ENCODE measurements at regions of chr13 and their contacts with region 1.

Region 1: GRCh38 chr13:31044377-31045285 is 112.2 kb downstream of the TEX26 start:
- DNase-seq: peak; percentile 66 to 88 (median 75)
- ATAC-seq: peak; percentile 81 to 92 (median 84)
- H3K4me3 ChIP-seq: no peak overlapping the region
- H3K27ac ChIP-seq: peak overlapping the region in 2 of 12 donors; percentile 59 to 82
- H3K4me1 ChIP-seq: peaks cover 0 to 32% (median 10%) of the 10 kb centered on the region in 12 donors
- H3K27me3 ChIP-seq: peaks cover 0 to 18% (median 0%) of the 10 kb centered on the region in 9 donors
- CTCF ChIP-seq: peak; percentile 91 to 98 (median 95)
- POLR2A ChIP-seq: no peak

Region 2: GRCh38 chr13:30593001-30593400 is 451.6 kb before region 1 on chr13:
- intact Hi-C with region 1: no loop called
- DNase-seq: no peak
- ATAC-seq: no peak
- H3K4me3 ChIP-seq: no peak overlapping the region
- H3K27ac ChIP-seq: no peak overlapping the region
- H3K4me1 ChIP-seq: no peaks in the 10 kb centered on the region
- H3K27me3 ChIP-seq: no peaks in the 10 kb centered on the region
- CTCF ChIP-seq: no peak
- POLR2A ChIP-seq: no peak

Region 3: DNA sequence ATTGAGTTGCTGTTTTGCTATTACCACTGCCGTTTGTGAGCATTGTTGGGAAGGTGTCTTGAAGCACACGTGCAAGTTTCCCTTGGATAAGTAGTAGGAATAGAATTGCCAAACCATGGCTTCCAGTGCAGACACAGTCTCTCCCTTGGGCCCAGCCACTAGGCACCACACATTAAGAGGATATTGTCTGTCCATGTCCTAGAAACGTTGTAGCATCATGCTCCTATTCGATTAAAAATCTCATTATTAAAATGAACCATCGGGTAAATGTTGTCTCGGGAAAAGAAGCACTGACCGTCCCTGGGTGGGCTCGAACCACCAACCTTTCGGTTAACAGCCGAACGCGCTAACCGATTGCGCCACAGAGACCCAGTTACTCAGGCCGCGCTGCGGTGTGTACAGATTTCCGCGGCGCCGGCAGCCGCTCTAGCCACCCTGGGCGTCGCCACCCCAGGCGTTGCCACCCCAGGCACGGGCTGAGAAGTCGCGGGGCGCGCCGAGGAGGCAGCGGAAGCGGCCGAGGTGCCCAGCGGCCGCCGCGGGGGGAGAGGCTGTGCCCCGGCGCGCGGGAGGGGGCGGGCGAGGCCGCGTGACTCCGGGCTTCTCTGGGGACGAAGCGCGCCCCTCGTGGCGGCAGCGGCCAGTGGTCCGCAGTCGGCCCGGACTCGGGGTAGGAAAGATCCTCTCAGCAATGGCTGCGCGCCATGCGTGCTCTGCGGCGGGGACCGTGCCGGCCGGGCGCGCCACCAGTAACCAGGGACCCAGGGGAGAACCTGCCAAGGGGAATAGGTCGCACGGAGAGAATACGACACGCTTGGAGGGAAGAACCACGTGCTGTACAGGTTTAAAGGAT is 370.7 kb before region 1 on chr13:
- intact Hi-C with region 1: loop called in 3 of 10 experiments (anchors 5 to 10 kb)
- DNase-seq: peak; percentile 88 to 95 (median 91)
- ATAC-seq: peak; percentile 91 to 97 (median 95)
- H3K4me3 ChIP-seq: peak overlapping the region; percentile 30 to 80 (median 62)
- H3K27ac ChIP-seq: peak overlapping the region in 11 of 12 donors; percentile 64 to 86 (median 79)
- H3K4me1 ChIP-seq: peaks cover 0 to 12% (median 2%) of the 10 kb centered on the region in 12 donors
- H3K27me3 ChIP-seq: no peaks in the 10 kb centered on the region
- CTCF ChIP-seq: peak; percentile 48 to 96 (median 76)
- POLR2A ChIP-seq: peak in 1 of 2 donors; percentile 26

Region 4: GRCh38 chr13:30679483-30680330 is 364.9 kb before region 1 on chr13:
- intact Hi-C with region 1: loop called in 4 of 10 experiments (anchors 5 to 10 kb)
- DNase-seq: peak in 1 of 5 donors; percentile 33
- ATAC-seq: peak; percentile 52 to 85 (median 74)
- H3K4me3 ChIP-seq: no peak overlapping the region
- H3K27ac ChIP-seq: no peak overlapping the region
- H3K4me1 ChIP-seq: peaks cover 0 to 19% (median 0%) of the 10 kb centered on the region in 12 donors
- H3K27me3 ChIP-seq: no peaks in the 10 kb centered on the region
- CTCF ChIP-seq: peak; percentile 34 to 68 (median 53)
- POLR2A ChIP-seq: no peak

Region 5: GRCh38 chr13:30978981-30979956 is 65.4 kb before region 1 on chr13:
- intact Hi-C with region 1: loop called in 2 of 10 experiments (anchors 2 to 5 kb)
- DNase-seq: no peak
- ATAC-seq: peak in 1 of 4 donors; percentile 26
- H3K4me3 ChIP-seq: no peak overlapping the region
- H3K27ac ChIP-seq: no peak overlapping the region
- H3K4me1 ChIP-seq: peaks cover 0 to 5% (median 0%) of the 10 kb centered on the region in 12 donors
- H3K27me3 ChIP-seq: no peaks in the 10 kb centered on the region
- CTCF ChIP-seq: peak; percentile 17 to 64 (median 54)
- POLR2A ChIP-seq: no peak